ENCODE measurements at regions of chr14 and their contacts with region 1.

Region 1: GRCh38 chr14:50003213-50004031 is 110.5 kb downstream of the ARF6 start:
- DNase-seq: peak; percentile 76 to 87 (median 79)
- H3K4me3 ChIP-seq: peak overlapping the region; percentile 65 to 69
- H3K4me3 Mint-ChIP-seq: peak overlapping the region; percentile 83 to 96 (median 87)
- H3K27ac ChIP-seq: peak overlapping the region; percentile 94
- H3K27ac Mint-ChIP-seq: peak overlapping the region; percentile 96 to 99 (median 98)
- H3K4me1 ChIP-seq: peaks cover 57% of the 10 kb centered on the region
- H3K4me1 Mint-ChIP-seq: peaks cover 43 to 64% (median 52%) of the 10 kb centered on the region in 4 donors
- H3K27me3 ChIP-seq: no peaks in the 10 kb centered on the region
- H3K27me3 Mint-ChIP-seq: no peaks in the 10 kb centered on the region

Region 2: DNA sequence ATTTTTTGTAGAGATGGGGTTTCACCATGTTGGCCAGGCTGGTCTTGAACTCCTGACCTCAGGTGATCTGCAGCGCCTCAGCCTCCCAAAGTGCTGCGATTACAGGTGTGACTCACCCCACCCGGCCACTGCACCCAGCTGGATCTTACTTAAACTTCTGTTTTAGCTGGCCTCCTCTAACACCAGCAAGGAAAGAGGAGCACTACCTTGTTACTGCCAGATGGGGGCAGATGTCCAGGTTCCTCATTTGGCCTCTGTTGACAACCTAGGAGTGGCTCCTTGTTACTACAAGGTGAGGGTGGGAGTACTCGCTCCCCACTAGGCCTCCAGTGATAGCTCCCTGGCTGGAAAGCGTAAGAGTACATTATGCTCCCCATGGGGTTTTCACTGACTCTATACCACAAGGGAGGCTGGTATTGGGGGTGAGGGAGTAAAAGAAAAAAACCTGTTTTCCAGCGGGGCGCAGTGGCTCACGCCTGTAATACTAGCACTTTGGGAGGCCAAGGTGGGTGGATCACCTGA is 123.7 kb before region 1 on chr14:
- CTCF ChIA-PET with region 1: interaction called, 27 read pairs
- POLR2A ChIA-PET with region 1: interaction called, 50 read pairs
- intact Hi-C with region 1: loop called (anchors 1 kb)
- DNase-seq: peak; percentile 63 to 72 (median 65)
- H3K4me3 ChIP-seq: no peak overlapping the region
- H3K4me3 Mint-ChIP-seq: no peak overlapping the region
- H3K27ac ChIP-seq: no peak overlapping the region
- H3K27ac Mint-ChIP-seq: peak overlapping the region; percentile 67 to 89 (median 82)
- H3K4me1 ChIP-seq: peaks cover 15% of the 10 kb centered on the region
- H3K4me1 Mint-ChIP-seq: peaks cover 6 to 12% (median 8%) of the 10 kb centered on the region in 4 donors
- H3K27me3 ChIP-seq: no peaks in the 10 kb centered on the region
- H3K27me3 Mint-ChIP-seq: no peaks in the 10 kb centered on the region

Region 3: GRCh38 chr14:49908432-49908781 is 95.0 kb before region 1 on chr14:
- CTCF ChIA-PET with region 1: interaction called, 4 read pairs
- POLR2A ChIA-PET with region 1: interaction called, 15 read pairs
- intact Hi-C with region 1: loop called (anchors 1 kb)
- DNase-seq: no peak
- H3K4me3 ChIP-seq: no peak overlapping the region
- H3K4me3 Mint-ChIP-seq: peak overlapping the region in 1 of 8 donors; percentile 39
- H3K27ac ChIP-seq: no peak overlapping the region
- H3K27ac Mint-ChIP-seq: peak overlapping the region in 2 of 7 donors; percentile 8 to 70
- H3K4me1 ChIP-seq: peaks cover 38% of the 10 kb centered on the region
- H3K4me1 Mint-ChIP-seq: peaks cover 18 to 42% (median 32%) of the 10 kb centered on the region in 4 donors
- H3K27me3 ChIP-seq: no peaks in the 10 kb centered on the region
- H3K27me3 Mint-ChIP-seq: no peaks in the 10 kb centered on the region

Region 4: DNA sequence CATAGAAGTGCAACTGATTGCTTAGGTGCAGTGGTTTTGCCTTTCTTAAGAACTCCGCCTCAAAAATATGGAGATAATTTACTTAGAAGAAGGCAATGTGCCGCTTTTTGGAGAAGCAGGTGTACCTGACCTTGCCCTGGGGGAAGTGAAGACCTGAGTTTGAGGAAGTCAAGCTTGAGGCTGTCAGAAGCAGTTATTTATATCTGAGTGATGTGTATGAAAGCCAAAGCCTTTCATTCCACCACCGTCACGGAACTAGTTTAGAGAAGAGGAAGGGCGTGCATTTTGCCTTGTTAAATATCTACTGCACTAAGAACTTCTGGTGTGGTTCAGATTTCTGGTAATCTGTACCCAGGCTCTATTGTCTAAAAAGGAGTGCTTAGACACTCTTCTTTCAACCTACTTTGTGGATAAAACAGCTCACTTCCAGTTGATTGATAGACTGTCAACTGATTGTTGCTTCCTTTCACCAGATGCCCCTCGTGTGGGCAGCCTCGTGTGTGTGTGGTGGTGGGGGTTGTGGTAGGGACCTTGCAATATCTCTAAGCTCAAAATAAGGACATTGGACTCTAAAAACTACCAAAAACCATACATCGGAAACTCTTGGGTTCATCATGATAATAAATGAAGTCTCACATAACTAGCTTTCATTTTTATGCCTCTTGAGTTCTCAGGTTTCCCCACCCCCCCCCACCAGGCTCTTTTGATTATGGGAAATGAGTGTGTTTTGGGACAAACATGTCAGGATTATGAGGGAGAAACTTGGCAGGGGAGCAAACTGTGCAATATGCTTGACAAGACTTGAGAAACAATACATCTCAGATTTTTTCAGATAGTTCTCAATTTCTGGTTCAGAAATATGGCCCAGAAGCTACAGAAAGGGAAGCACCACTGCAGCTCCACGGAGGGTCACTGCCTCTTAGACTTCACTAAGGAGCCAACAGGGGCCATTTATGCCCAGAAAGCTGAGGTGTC is 32.0 kb before region 1 on chr14:
- CTCF ChIA-PET with region 1: interaction called, 72 read pairs
- POLR2A ChIA-PET with region 1: interaction called, 486 read pairs
- intact Hi-C with region 1: loop called (anchors 1 kb)
- DNase-seq: peak; percentile 75 to 85 (median 82)
- H3K4me3 ChIP-seq: peak overlapping the region; percentile 36 to 44
- H3K4me3 Mint-ChIP-seq: peak overlapping the region; percentile 77 to 89 (median 82)
- H3K27ac ChIP-seq: peak overlapping the region; percentile 73
- H3K27ac Mint-ChIP-seq: peak overlapping the region; percentile 87 to 98 (median 96)
- H3K4me1 ChIP-seq: peaks cover 69% of the 10 kb centered on the region
- H3K4me1 Mint-ChIP-seq: peaks cover 44 to 76% (median 62%) of the 10 kb centered on the region in 4 donors
- H3K27me3 ChIP-seq: no peaks in the 10 kb centered on the region
- H3K27me3 Mint-ChIP-seq: no peaks in the 10 kb centered on the region

Region 5: DNA sequence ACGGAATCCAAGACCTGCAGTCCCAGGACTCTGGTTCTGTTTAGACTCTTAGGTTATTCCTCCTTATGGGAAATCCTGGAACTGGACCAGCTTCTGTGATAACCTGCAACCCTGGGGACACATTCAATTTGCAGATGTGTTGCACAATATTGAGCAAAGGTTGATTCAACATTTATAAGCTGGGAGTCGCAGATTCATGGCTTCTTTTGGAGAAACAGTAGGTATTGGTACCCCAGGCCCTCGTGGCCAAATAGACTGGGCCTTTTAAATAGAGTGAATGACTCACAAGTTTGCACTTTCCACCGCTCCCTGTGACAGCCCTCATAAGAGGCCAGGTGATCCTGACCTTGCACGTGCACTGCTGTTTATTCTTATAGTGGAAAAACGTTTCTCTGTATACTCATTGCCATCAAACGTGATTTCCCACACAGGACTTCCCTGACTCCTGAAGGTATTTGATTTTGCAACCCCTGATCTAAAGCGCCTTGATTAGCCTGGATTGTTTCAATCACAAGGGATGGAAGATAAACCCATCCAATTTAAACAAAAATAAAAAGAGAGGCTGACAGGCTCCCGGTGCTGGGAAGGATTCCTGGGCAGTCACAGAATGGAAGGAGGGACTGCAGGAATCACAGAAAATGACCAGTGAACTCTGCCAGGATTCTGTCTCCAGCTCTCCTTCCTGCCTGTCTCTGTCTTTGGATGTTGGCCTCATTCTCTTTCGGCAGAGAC is 14.9 kb after region 1 on chr14:
- CTCF ChIA-PET with region 1: interaction called, 8 read pairs
- POLR2A ChIA-PET with region 1: interaction called, 20 read pairs
- intact Hi-C with region 1: no loop called
- DNase-seq: no peak
- H3K4me3 ChIP-seq: no peak overlapping the region
- H3K4me3 Mint-ChIP-seq: no peak overlapping the region
- H3K27ac ChIP-seq: no peak overlapping the region
- H3K27ac Mint-ChIP-seq: no peak overlapping the region
- H3K4me1 ChIP-seq: peaks cover 12% of the 10 kb centered on the region
- H3K4me1 Mint-ChIP-seq: peaks cover 14 to 32% (median 18%) of the 10 kb centered on the region in 4 donors
- H3K27me3 ChIP-seq: no peaks in the 10 kb centered on the region
- H3K27me3 Mint-ChIP-seq: no peaks in the 10 kb centered on the region

Region 6: DNA sequence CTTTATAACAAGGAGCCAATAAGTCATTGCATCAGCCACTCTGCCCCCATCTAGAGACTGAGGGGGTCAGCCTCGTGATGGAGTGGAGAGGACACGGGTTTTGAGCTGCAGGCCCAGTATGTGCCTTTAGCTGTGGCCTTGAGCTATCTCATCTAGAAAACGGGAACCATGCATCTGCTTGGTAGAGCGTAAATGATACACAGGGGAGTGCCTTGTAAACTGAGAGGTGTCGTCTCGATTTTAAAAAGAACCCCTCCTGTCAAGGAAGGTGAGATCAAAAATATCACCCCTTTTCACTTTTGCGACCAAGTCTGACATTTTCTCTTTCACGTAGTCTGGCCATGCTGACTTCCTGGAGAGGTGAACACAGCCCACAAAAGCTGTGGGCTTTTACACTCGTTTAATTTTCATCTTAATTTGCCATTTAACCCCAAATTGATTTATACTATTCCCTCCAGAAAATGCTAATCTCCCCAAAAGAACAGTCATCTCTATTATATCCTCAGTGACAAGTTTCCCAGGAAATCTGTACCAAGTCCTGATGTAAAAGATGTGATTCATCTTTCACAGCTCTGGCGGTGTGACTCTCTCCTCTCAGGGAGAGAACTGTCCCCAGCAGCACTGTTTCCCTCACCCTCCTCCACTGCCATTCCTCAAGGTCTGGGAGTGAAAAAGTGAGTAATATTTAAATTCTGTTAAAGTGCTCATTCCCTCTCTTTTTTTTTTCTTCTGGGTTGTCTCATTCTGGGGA is 82.3 kb after region 1 on chr14:
- CTCF ChIA-PET with region 1: interaction called, 14 read pairs
- POLR2A ChIA-PET with region 1: interaction called, 87 read pairs
- intact Hi-C with region 1: loop called (anchors 1 kb)
- DNase-seq: peak; percentile 21 to 48 (median 28)
- H3K4me3 ChIP-seq: no peak overlapping the region
- H3K4me3 Mint-ChIP-seq: peak overlapping the region; percentile 23 to 78 (median 71)
- H3K27ac ChIP-seq: peak overlapping the region; percentile 99
- H3K27ac Mint-ChIP-seq: peak overlapping the region; percentile 83 to 99 (median 95)
- H3K4me1 ChIP-seq: peaks cover 88% of the 10 kb centered on the region
- H3K4me1 Mint-ChIP-seq: peaks cover 58 to 89% (median 76%) of the 10 kb centered on the region in 4 donors
- H3K27me3 ChIP-seq: no peaks in the 10 kb centered on the region
- H3K27me3 Mint-ChIP-seq: no peaks in the 10 kb centered on the region

Region 7: DNA sequence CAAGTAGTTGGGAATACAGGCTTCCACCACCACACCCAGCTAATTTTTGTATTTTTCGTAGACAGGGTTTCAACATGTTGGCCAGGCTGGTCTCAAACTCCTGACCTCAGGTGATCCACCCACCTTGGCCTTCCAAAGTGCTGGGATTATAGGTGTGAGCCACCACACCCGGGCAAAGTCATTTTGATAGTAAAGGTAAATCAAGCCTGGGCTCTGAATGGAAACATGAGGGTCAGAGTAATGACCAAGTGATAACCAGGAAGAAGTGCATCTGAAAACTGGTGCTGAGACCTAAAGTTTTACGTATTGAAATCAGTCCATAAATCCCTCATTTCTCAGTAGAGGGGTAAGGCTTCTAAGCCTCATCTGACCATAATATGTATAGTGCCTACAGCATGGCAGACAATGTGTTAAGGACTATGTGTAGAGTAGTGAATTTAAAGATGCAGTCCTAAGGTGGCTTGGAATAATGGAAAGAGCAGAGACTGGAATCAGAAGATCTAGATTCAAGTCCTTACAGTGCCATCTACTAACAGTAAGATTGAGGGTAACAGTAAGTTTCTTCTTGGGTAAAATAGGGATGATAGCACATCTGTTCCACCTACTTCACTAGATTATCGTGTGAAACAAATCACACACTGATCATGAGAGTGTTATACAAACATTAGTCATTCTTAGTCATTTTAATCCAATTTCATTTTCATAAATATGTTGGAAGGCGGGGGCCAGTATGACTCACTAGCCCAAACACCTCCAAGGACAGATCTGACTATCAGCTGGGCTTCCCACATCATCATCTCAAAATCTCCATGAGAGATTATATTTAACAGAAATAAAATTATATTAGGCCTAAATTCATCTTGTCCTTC is 517.8 kb after region 1 on chr14:
- CTCF ChIA-PET with region 1: no interaction called
- POLR2A ChIA-PET with region 1: no interaction called
- intact Hi-C with region 1: no loop called
- DNase-seq: peak in 1 of 5 donors; percentile 44
- H3K4me3 ChIP-seq: no peak overlapping the region
- H3K4me3 Mint-ChIP-seq: peak overlapping the region; percentile 13 to 83 (median 68)
- H3K27ac ChIP-seq: peak overlapping the region; percentile 45
- H3K27ac Mint-ChIP-seq: peak overlapping the region; percentile 7 to 86 (median 83)
- H3K4me1 ChIP-seq: peaks cover 47% of the 10 kb centered on the region
- H3K4me1 Mint-ChIP-seq: peaks cover 47 to 54% (median 50%) of the 10 kb centered on the region in 4 donors
- H3K27me3 ChIP-seq: no peaks in the 10 kb centered on the region
- H3K27me3 Mint-ChIP-seq: no peaks in the 10 kb centered on the region

Measured in CD4-positive, alpha-beta memory T cell (primary cell).